Vagina (tissue), 2 donors: ENCODE measurements at regions of chrX and their contacts with region 1.

Region 1: GRCh38 chrX:13669246-13669737 is 16.4 kb downstream of the TCEANC start:
- DNase-seq: no peak
- H3K4me3 ChIP-seq: peak overlapping the region in 1 of 2 donors; percentile 9
- H3K27ac ChIP-seq: peak overlapping the region; percentile 62
- H3K4me1 ChIP-seq: peaks cover 5% of the 10 kb centered on the region
- H3K27me3 ChIP-seq: no peaks in the 10 kb centered on the region
- CTCF ChIP-seq: no peak
- POLR2A ChIP-seq: no peak

Region 2: GRCh38 chrX:13506574-13506973 is 162.7 kb before region 1 on chrX:
- intact Hi-C with region 1: loop called (anchors 10 kb)
- DNase-seq: no peak
- H3K4me3 ChIP-seq: no peak overlapping the region
- H3K27ac ChIP-seq: no peak overlapping the region
- H3K4me1 ChIP-seq: no peaks in the 10 kb centered on the region
- H3K27me3 ChIP-seq: no peaks in the 10 kb centered on the region
- CTCF ChIP-seq: peak; percentile 63 to 84 (median 73)
- POLR2A ChIP-seq: no peak